A673 (cell line): ENCODE measurements at regions of chr11 and their contacts with region 1.

Region 1: DNA sequence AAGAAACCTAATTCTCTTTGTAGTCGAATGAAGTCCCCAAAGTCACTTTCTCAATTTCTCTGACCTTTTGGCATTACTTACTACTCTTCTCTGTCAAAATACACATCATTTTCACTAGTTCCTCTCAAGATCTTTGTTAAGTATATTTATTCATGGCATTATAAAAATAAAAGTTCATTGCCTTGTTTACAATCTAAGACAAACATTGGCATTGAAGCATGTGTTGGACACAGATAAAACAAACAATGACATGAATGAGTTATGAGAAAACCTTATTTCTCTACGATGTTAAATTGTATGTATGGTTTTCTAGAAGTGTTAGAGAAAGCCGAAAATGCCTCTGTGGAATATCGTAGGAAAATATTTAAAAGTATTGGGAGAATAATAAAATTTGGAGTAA is 8.6 kb upstream of the OR51G1 start:
- DNase-seq: no peak
- H3K4me3 ChIP-seq: no peak overlapping the region
- H3K27ac ChIP-seq: no peak overlapping the region
- H3K4me1 ChIP-seq: no peaks in the 10 kb centered on the region
- H3K27me3 ChIP-seq: no peaks in the 10 kb centered on the region
- CTCF ChIP-seq: no peak

Region 2: GRCh38 chr11:4979036-4979435 is 46.3 kb after region 1 on chr11:
- CTCF ChIA-PET with region 1: no interaction called
- POLR2A ChIA-PET with region 1: no interaction called
- intact Hi-C with region 1: loop called (anchors 5 kb)
- DNase-seq: no peak
- H3K4me3 ChIP-seq: no peak overlapping the region
- H3K27ac ChIP-seq: no peak overlapping the region
- H3K4me1 ChIP-seq: no peaks in the 10 kb centered on the region
- H3K27me3 ChIP-seq: no peaks in the 10 kb centered on the region
- CTCF ChIP-seq: no peak

Region 3: DNA sequence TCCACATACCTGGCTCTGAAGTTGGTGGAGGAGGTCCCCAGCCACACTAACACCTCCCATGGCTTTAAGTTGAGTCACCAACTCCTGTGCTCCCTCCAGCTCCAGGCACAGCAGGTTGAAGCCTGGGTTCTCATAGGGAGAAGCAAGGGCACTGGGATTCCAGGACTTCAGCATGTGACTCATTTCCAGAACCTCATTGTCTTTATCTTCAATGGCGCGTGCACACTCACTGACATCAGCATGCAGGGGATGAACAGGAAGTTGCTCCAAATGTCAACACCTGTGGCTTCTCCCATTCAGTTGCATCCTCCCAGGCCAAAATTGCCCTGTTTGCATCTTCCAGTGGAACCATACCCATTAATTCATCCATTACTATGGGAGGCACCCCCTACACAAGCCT is 589.6 kb after region 1 on chr11:
- CTCF ChIA-PET with region 1: no interaction called
- POLR2A ChIA-PET with region 1: no interaction called
- intact Hi-C with region 1: no loop called
- DNase-seq: no peak
- H3K4me3 ChIP-seq: no peak overlapping the region
- H3K27ac ChIP-seq: no peak overlapping the region
- H3K4me1 ChIP-seq: no peaks in the 10 kb centered on the region
- H3K27me3 ChIP-seq: no peaks in the 10 kb centered on the region
- CTCF ChIP-seq: no peak